ENCODE measurements at regions of chr6 and their contacts with region 1.

Region 1: DNA sequence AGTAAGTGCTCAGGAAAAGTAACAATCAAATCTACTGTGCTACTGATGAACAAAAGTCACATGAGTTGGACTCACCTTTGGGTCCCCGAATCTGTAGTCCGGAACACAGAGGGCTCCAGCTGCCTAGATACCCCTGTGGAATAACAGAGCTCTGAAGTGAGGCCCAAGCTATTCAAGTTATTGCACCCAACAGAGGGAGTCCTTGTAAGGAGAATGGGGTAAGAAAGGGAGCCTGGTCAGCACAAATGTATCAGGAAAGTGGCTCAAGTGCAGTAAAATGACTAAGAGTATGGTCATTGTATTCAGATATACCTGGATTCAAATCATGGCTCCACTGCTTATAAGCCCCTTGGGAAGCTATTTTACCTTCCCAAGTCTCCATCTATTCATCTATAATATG is 20.9 kb downstream of the EDN1 start:
- DNase-seq: peak in 1 of 2 experiments; percentile 27
- H3K4me3 ChIP-seq: no peak overlapping the region
- H3K27ac ChIP-seq: no peak overlapping the region
- H3K4me1 ChIP-seq: no peaks in the 10 kb centered on the region
- H3K27me3 ChIP-seq: no peaks in the 10 kb centered on the region
- CTCF ChIP-seq: peak in 2 of 3 experiments; percentile 3 to 5; a peak in 1 of 4 replicates
- EP300 ChIP-seq: no peak
- POLR2A ChIP-seq: no peak
- RAD21 ChIP-seq: peak; percentile 24 to 44; a peak in 1 of 4 replicates

Region 2: GRCh38 chr6:12245763-12246718 is 65.1 kb before region 1 on chr6:
- CTCF ChIA-PET with region 1: no interaction called
- POLR2A ChIA-PET with region 1: no interaction called
- DNase-seq: no peak
- H3K4me3 ChIP-seq: no peak overlapping the region
- H3K27ac ChIP-seq: no peak overlapping the region
- H3K4me1 ChIP-seq: peaks cover 0 to 5% (median 3%) of the 10 kb centered on the region in 4 experiments; a peak in 3 of 7 replicates
- H3K27me3 ChIP-seq: no peaks in the 10 kb centered on the region
- CTCF ChIP-seq: peak in 1 of 3 experiments; percentile 16; a peak in 1 of 4 replicates
- EP300 ChIP-seq: no peak
- POLR2A ChIP-seq: no peak
- RAD21 ChIP-seq: peak in 1 of 2 experiments; percentile 21; a peak in 1 of 4 replicates

Region 3: GRCh38 chr6:12297363-12298016 is 13.6 kb before region 1 on chr6:
- CTCF ChIA-PET with region 1: interaction called, 13 read pairs
- POLR2A ChIA-PET with region 1: no interaction called
- DNase-seq: no peak
- H3K4me3 ChIP-seq: no peak overlapping the region
- H3K27ac ChIP-seq: no peak overlapping the region
- H3K4me1 ChIP-seq: peaks cover 0 to 6% (median 0%) of the 10 kb centered on the region in 4 experiments; a peak in 3 of 7 replicates
- H3K27me3 ChIP-seq: no peaks in the 10 kb centered on the region; a peak in 1 of 7 replicates
- CTCF ChIP-seq: no peak
- EP300 ChIP-seq: no peak
- POLR2A ChIP-seq: no peak
- RAD21 ChIP-seq: no peak

Measured in H1 (cell line).